Activated naive CD4-positive, alpha-beta T cell treated with anti-CD3 and anti-CD28 coated beads for 36 hours (primary cell): ENCODE measurements at regions of chr6 and their contacts with region 1.

Region 1: DNA sequence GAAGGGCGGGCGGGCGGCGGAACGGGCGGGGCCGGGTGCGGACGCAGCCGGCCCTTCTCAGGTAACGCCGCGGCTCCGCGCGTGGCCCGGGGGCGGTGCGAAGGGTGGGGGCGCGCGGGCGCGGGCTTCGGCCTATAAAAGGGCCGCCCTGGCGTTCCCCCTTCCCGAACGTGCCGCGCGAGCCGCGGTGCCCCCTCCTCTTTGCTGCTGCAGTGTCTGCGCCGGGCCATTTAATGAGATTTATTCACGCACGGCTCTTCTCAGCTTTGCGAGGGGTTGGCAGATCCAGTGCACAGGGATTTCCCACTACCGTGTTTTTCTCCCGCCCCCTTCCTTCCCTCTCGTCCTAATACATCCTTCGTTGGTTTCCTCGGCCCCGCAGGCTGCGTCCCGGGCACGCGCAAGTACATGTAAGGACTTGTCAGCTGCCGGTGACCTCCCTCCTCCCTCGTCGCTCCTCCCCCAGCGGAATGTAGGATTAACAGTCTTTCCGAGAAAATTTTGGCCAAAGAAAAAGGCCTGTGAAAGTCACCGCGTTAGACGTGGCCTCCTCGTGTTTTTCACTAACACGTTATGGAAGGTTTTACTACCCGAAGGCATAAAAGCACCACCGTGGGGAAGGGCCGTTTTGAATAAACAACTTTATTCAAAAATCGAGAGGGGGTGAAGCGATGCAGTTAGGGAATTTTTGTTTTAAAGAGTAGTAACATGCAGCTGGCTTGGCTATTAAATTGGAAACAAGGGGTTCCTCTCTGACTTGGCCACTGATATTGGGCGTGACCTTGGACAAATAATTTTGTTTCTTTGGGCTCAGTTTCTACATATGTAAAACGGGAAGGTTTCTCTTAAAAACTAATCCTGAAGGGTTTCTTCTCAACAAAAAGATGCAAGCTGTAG is 966 bp upstream of the REV3L start:
- DNase-seq: peak; percentile 92
- H3K4me3 Mint-ChIP-seq: peak overlapping the region; percentile 97
- H3K27ac Mint-ChIP-seq: peak overlapping the region; percentile 99
- H3K4me1 Mint-ChIP-seq: peaks cover 47% of the 10 kb centered on the region
- H3K27me3 Mint-ChIP-seq: no peaks in the 10 kb centered on the region

Region 2: GRCh38 chr6:110873981-110874879 is 609.8 kb before region 1 on chr6 and contains the start of gene AMD1:
- CTCF ChIA-PET with region 1: no interaction called
- intact Hi-C with region 1: loop called (anchors 2 kb)
- DNase-seq: peak; percentile 94
- H3K4me3 Mint-ChIP-seq: peak within 1 kb of the TSS; percentile 95
- H3K27ac Mint-ChIP-seq: peak within 1 kb of the TSS; percentile 95
- H3K4me1 Mint-ChIP-seq: peaks cover 29% of the 10 kb centered on the region
- H3K27me3 Mint-ChIP-seq: no peaks in the 10 kb centered on the region
- total RNA-seq, gene AMD1: 72.6 to 75.3 TPM

Region 3: GRCh38 chr6:111113336-111114086 is 370.5 kb before region 1 on chr6:
- CTCF ChIA-PET with region 1: interaction called, 3 read pairs
- intact Hi-C with region 1: loop called (anchors 5 kb)
- DNase-seq: peak; percentile 82
- H3K4me3 Mint-ChIP-seq: peak overlapping the region; percentile 65
- H3K27ac Mint-ChIP-seq: peak overlapping the region; percentile 92
- H3K4me1 Mint-ChIP-seq: peaks cover 34% of the 10 kb centered on the region
- H3K27me3 Mint-ChIP-seq: no peaks in the 10 kb centered on the region

Region 4: GRCh38 chr6:111515259-111515658 is 31.3 kb after region 1 on chr6:
- CTCF ChIA-PET with region 1: no interaction called
- intact Hi-C with region 1: no loop called
- DNase-seq: no peak
- H3K4me3 Mint-ChIP-seq: no peak overlapping the region
- H3K27ac Mint-ChIP-seq: no peak overlapping the region
- H3K4me1 Mint-ChIP-seq: no peaks in the 10 kb centered on the region
- H3K27me3 Mint-ChIP-seq: no peaks in the 10 kb centered on the region

Region 5: GRCh38 chr6:111573892-111574797 is 90.2 kb after region 1 on chr6:
- CTCF ChIA-PET with region 1: no interaction called
- intact Hi-C with region 1: loop called (anchors 1 kb)
- DNase-seq: no peak
- H3K4me3 Mint-ChIP-seq: no peak overlapping the region
- H3K27ac Mint-ChIP-seq: peak overlapping the region; percentile 56
- H3K4me1 Mint-ChIP-seq: peaks cover 31% of the 10 kb centered on the region
- H3K27me3 Mint-ChIP-seq: no peaks in the 10 kb centered on the region

Region 6: DNA sequence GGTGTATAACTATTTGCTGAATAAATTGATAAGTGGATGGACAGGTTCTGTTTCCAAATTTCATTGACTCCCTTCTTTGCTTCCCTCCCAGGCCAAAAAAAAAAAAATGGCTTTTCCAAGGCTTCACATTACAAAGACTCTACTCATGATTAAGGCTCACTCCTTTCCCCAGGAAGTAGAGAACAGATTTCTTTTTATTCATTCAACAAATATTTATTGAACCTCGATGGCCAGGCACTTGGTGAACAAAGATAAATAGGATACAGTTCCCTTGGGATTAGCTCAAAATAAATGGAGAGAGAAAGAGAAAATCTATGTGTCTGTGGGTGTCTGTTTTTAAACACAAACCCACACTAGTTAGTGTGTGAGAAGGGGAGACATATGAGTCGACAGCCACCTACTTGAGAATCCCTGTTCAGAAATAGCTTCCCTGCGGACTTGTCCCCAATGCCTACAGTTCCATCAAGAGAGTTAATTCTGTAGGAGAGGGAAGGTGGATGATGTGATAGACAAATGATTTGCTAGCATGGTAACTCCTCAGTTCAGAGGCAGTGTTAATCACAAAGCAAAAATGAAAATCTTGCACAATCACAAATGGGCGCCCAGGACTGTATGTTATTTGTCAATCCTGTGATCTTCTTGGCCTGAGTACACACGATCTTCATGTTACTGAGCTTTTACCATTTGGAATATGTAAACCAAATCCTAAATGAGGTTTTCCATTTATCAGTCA is 101.4 kb after region 1 on chr6:
- CTCF ChIA-PET with region 1: no interaction called
- intact Hi-C with region 1: no loop called
- DNase-seq: no peak
- H3K4me3 Mint-ChIP-seq: no peak overlapping the region
- H3K27ac Mint-ChIP-seq: no peak overlapping the region
- H3K4me1 Mint-ChIP-seq: peaks cover 22% of the 10 kb centered on the region
- H3K27me3 Mint-ChIP-seq: no peaks in the 10 kb centered on the region

Region 7: DNA sequence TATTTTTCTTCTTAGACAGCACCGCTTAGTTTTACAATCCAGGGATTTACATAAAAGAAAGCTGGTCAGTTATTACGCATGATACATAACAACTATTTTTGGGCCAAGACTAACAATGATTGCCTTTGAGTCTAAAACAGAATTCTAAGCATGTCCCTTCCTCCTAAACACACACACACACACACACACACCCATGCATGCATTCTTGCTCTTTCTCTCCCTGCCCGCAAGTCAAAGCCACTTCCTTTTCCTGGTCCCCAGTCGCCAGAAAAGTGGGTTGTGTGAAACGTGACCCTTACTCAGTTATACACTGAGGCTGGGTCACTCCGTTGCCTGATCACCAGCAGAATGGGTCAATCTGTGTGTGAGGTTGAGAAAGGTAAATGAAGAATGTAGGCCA is 357.8 kb after region 1 on chr6:
- CTCF ChIA-PET with region 1: no interaction called
- intact Hi-C with region 1: loop called (anchors 10 kb)
- DNase-seq: peak; percentile 70
- H3K4me3 Mint-ChIP-seq: no peak overlapping the region
- H3K27ac Mint-ChIP-seq: no peak overlapping the region
- H3K4me1 Mint-ChIP-seq: peaks cover 36% of the 10 kb centered on the region
- H3K27me3 Mint-ChIP-seq: no peaks in the 10 kb centered on the region

Region 8: DNA sequence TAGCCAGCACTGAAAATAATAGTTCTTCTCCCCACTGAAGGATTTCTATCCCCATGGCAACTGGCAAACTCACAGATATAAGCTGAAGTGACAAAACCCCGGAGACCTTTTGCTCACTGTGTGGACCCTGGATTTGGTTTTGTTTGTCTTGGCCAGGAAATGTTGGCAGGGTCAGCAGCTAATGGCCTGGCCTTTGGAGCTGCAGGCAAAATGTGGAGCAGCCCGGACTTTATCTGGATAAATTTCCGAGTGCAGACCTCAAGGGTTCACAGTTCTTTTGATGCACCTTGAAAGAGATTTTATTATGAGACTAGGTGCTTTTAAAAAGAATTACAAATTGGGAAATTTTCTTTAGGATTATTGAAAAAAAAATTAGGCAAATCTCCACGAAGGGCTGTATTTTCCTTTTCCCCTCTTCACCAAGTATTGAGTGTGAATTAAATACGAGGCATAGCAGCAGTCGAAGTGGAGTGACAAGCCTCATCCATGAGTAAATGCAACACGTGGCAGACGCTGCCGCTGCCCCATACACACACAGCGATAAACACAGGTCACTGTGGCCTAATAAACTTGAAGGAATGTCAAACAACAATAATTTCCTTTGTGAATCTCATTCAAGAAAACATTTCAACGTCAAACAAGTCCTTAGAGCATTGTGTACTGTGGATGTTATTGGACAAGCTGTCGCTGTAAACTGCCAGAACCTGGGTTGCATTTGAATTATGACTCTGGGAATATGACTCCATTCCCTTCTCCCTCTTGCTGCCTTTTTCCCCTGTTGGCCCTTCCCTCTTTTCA is 534.8 kb after region 1 on chr6:
- CTCF ChIA-PET with region 1: no interaction called
- intact Hi-C with region 1: loop called (anchors 1 kb)
- DNase-seq: no peak
- H3K4me3 Mint-ChIP-seq: no peak overlapping the region
- H3K27ac Mint-ChIP-seq: no peak overlapping the region
- H3K4me1 Mint-ChIP-seq: peaks cover 67% of the 10 kb centered on the region
- H3K27me3 Mint-ChIP-seq: no peaks in the 10 kb centered on the region